CD8-positive, alpha-beta T cell (primary cell): ENCODE measurements at regions of chr7 and their contacts with region 1.

Region 1: DNA sequence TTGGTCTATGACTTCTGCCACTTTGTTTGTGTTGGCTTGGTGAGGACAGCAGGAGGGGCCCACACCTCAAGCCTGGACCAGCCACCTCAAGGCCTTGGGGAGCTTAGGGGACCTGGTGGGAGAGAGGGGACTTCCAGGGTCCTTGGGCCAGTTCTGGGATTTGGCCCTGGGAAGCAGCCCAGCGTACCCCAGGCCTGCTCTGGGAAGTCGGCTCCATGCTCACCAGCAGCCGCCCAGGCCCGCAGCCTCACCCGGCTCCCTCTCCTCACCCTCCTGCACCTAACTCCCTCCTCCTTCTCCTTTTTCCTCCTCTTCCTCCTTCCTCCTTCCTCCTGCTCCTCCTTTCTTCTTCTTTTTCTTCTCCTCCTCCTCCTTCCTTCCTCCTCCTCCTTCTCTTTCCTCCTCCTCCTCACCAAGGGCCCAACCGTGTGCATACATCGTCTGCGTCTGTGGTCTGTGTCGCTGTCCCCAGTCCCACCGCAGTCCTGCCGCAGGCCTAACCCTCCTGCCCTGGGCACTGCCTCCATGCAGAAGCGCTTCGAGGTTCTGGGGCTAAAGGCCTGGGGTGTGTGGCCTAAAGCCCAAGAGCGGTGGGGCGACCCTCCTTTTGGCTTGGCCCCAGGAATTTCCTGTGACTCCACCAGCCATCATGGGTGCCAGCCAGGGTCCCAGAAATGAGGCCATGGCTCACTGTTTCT is 5.3 kb downstream of the EN2 start:
- DNase-seq: no peak
- ATAC-seq: no peak
- H3K4me3 ChIP-seq: no peak overlapping the region
- H3K4me3 Mint-ChIP-seq: no peak overlapping the region
- H3K27ac ChIP-seq: no peak overlapping the region
- H3K27ac Mint-ChIP-seq: no peak overlapping the region
- H3K4me1 ChIP-seq: peaks cover 19% of the 10 kb centered on the region
- H3K4me1 Mint-ChIP-seq: peaks cover 16% of the 10 kb centered on the region
- H3K27me3 ChIP-seq: peaks cover 44 to 52% of the 10 kb centered on the region in 2 experiments
- H3K27me3 Mint-ChIP-seq: peaks cover 64% of the 10 kb centered on the region
- CTCF ChIP-seq: no peak

Region 2: GRCh38 chr7:155263332-155264143 is 199.7 kb before region 1 on chr7:
- CTCF ChIA-PET with region 1: no interaction called
- POLR2A ChIA-PET with region 1: no interaction called
- intact Hi-C with region 1: no loop called
- DNase-seq: no peak
- ATAC-seq: no peak
- H3K4me3 ChIP-seq: no peak overlapping the region
- H3K4me3 Mint-ChIP-seq: no peak overlapping the region
- H3K27ac ChIP-seq: no peak overlapping the region
- H3K27ac Mint-ChIP-seq: no peak overlapping the region
- H3K4me1 ChIP-seq: no peaks in the 10 kb centered on the region
- H3K4me1 Mint-ChIP-seq: no peaks in the 10 kb centered on the region
- H3K27me3 ChIP-seq: peaks cover 0 to 4% of the 10 kb centered on the region in 2 experiments
- H3K27me3 Mint-ChIP-seq: peaks cover 2% of the 10 kb centered on the region
- CTCF ChIP-seq: no peak

Region 3: GRCh38 chr7:155506854-155507337 is 43.6 kb after region 1 on chr7:
- CTCF ChIA-PET with region 1: no interaction called
- POLR2A ChIA-PET with region 1: no interaction called
- intact Hi-C with region 1: loop called in 1 of 2 experiments (anchors 5 kb)
- DNase-seq: peak in 1 of 9 experiments; percentile 22
- ATAC-seq: no peak
- H3K4me3 ChIP-seq: no peak overlapping the region
- H3K4me3 Mint-ChIP-seq: no peak overlapping the region
- H3K27ac ChIP-seq: no peak overlapping the region
- H3K27ac Mint-ChIP-seq: no peak overlapping the region
- H3K4me1 ChIP-seq: peaks cover 14% of the 10 kb centered on the region
- H3K4me1 Mint-ChIP-seq: peaks cover 22% of the 10 kb centered on the region
- H3K27me3 ChIP-seq: peaks cover 28 to 48% of the 10 kb centered on the region in 2 experiments
- H3K27me3 Mint-ChIP-seq: peaks cover 77% of the 10 kb centered on the region
- CTCF ChIP-seq: no peak